SK-N-SH (cell line): ENCODE measurements at regions of chr17 and their contacts with region 1.

Region 1: GRCh38 chr17:7982666-7983065 is 19.7 kb upstream of the GUCY2D start:
- DNase-seq: no peak
- H3K4me3 ChIP-seq: peak overlapping the region in 1 of 2 experiments; percentile 33; a peak in 1 of 4 replicates
- H3K27ac ChIP-seq: peak overlapping the region in 1 of 2 experiments; percentile 59; a peak in 2 of 4 replicates
- H3K4me1 ChIP-seq: no peaks in the 10 kb centered on the region; a peak in 1 of 4 replicates
- H3K27me3 ChIP-seq: no peaks in the 10 kb centered on the region
- CTCF ChIP-seq: peak; percentile 48
- EP300 ChIP-seq: no peak
- RAD21 ChIP-seq: peak; percentile 58

Region 2: GRCh38 chr17:7280519-7281429 is 701.9 kb before region 1 on chr17:
- CTCF ChIA-PET with region 1: no interaction called
- POLR2A ChIA-PET with region 1: no interaction called
- DNase-seq: peak; percentile 84
- H3K4me3 ChIP-seq: peak overlapping the region; percentile 50 to 64
- H3K27ac ChIP-seq: peak overlapping the region in 1 of 2 experiments; percentile 52; a peak in 1 of 4 replicates
- H3K4me1 ChIP-seq: peaks cover 6 to 18% of the 10 kb centered on the region in 2 experiments; a peak in 2 of 4 replicates
- H3K27me3 ChIP-seq: no peaks in the 10 kb centered on the region
- CTCF ChIP-seq: peak; percentile 72
- EP300 ChIP-seq: no peak
- RAD21 ChIP-seq: peak; percentile 93

Region 3: DNA sequence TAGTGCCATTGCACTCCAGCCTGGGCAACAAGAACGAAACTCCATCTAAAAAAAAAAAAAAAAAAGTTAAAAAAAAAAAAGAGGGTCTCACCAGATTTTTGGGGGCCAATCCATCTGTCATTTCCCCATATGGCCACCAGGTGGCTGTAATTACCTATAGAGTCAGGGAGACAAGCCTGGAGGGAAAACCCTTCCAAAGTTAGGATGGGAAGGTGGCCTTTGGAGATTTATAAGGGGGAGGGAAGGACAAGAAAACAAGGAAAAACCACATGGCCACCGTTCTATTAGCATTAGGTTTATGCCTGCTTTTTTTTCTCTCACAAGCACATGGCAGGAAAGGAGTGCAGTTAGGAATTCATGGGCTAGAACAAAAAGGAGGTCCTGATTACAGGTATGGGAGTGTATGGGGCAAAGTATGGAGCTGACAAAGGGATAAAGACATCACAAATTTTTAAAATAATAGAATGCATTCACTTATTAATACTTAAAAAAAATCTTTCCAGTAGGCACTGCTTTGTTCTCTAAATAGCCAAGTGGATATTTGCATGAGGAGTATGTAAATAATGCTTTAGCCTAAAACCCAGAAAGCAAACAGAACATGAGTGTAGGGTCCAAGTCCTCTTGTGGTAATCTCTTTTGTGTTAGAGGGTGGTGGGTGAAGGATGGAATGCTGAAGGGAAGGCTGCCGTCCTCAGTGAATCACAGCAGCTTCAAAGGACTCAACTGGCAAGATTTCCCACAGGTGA is 119.8 kb before region 1 on chr17:
- CTCF ChIA-PET with region 1: interaction called, 18 read pairs
- POLR2A ChIA-PET with region 1: no interaction called
- DNase-seq: peak; percentile 71
- H3K4me3 ChIP-seq: no peak overlapping the region; a peak in 1 of 4 replicates
- H3K27ac ChIP-seq: peak overlapping the region in 1 of 2 experiments; percentile 39; a peak in 1 of 4 replicates
- H3K4me1 ChIP-seq: peaks cover 9 to 19% of the 10 kb centered on the region in 2 experiments; a peak in 2 of 4 replicates
- H3K27me3 ChIP-seq: no peaks in the 10 kb centered on the region
- CTCF ChIP-seq: peak; percentile 87
- EP300 ChIP-seq: no peak
- RAD21 ChIP-seq: peak; percentile 87

Region 4: GRCh38 chr17:7915611-7916382 is 66.9 kb before region 1 on chr17 and contains the start of gene RNF227:
- CTCF ChIA-PET with region 1: interaction called, 90 read pairs
- POLR2A ChIA-PET with region 1: no interaction called
- DNase-seq: peak; percentile 93
- H3K4me3 ChIP-seq: peak within 1 kb of the TSS; percentile 57 to 62
- H3K27ac ChIP-seq: peak within 1 kb of the TSS; percentile 60 to 90
- H3K4me1 ChIP-seq: peaks cover 14 to 18% of the 10 kb centered on the region in 2 experiments; a peak in 2 of 4 replicates
- H3K27me3 ChIP-seq: no peaks in the 10 kb centered on the region
- CTCF ChIP-seq: no peak
- EP300 ChIP-seq: no peak
- RAD21 ChIP-seq: peak; percentile 11; the same call in 1 of the 2 replicates
- polyA plus RNA-seq, gene RNF227: 7.4 and 9.0 TPM in 2 replicates

Region 5: GRCh38 chr17:8006836-8007680 is 24.4 kb after region 1 on chr17:
- CTCF ChIA-PET with region 1: no interaction called
- POLR2A ChIA-PET with region 1: no interaction called
- DNase-seq: no peak
- H3K4me3 ChIP-seq: no peak overlapping the region
- H3K27ac ChIP-seq: no peak overlapping the region
- H3K4me1 ChIP-seq: no peaks in the 10 kb centered on the region
- H3K27me3 ChIP-seq: 0 out of 2 replicates have a peak, but pooled peaks cover 1% of the 10 kb centered on the region
- CTCF ChIP-seq: no peak
- EP300 ChIP-seq: no peak
- RAD21 ChIP-seq: no peak